AG04449 (cell line): ENCODE measurements at regions of chr6 and their contacts with region 1.

Region 1: GRCh38 chr6:26199057-26199772 is 112.0 kb downstream of the HFE start:
- DNase-seq: no peak
- H3K4me3 ChIP-seq: peak overlapping the region; percentile 85
- CTCF ChIP-seq: no peak

Region 2: DNA sequence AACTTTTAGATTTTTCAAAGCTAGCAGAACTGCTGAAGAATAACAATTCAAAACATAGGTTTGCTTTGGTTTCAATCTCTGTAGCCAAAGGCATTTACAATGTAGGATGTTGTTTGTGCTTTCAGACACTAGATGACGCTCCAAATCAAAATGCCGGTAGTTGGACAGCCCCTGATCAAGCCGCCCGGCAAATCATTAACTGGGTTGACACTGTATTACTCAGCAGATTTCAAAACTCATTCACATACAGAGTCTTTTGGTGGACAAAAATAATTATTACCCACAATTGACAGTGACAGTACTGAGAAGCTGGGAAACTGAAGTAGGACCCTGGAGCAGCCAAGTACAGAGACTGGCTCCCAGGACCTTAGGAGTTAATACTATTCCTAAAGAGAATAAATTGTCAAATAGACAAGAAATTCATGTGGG is 133.2 kb before region 1 on chr6:
- CTCF ChIA-PET with region 1: interaction called, 17 read pairs
- POLR2A ChIA-PET with region 1: no interaction called
- DNase-seq: no peak
- H3K4me3 ChIP-seq: no peak overlapping the region
- CTCF ChIP-seq: peak; percentile 75

Region 3: GRCh38 chr6:26116267-26116666 is 82.9 kb before region 1 on chr6:
- CTCF ChIA-PET with region 1: no interaction called
- POLR2A ChIA-PET with region 1: no interaction called
- DNase-seq: no peak
- H3K4me3 ChIP-seq: no peak overlapping the region
- CTCF ChIP-seq: no peak

Region 4: DNA sequence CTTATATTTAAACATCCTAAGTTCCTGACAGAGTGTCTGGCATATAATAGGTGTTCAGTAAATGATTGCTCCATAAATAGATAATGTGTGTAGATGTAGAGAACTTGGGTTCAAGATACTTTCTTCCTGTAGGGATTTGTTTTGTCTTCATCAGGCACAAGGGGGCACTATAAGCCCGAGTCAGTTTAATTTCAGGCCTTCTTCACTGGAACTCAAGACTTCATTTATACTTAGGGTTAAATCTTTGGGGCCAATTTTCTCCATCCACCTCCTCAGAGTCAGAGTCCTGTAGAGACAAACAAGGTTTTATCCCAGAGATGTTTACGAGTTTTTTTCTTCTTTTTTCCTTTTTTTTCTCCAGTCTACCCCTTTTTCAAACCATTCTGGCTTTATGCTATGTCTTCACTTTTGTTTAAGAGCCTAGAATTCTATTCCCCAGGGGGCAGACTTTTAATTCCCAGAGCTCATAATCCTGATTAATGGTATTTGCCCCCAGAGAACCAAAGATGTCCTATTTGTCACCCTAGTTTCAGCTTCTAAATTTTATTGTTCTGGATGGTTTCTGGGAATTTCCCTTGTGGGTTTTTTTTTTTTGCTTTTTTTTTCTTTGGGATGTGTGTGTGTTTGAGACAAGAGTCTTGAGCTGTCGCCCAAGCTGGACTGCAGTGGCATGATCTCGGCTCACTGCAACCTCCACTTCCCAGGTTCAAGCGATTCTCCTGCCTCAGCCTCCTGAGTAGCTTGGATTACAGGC is 23.6 kb before region 1 on chr6:
- CTCF ChIA-PET with region 1: interaction called, 6 read pairs
- POLR2A ChIA-PET with region 1: interaction called, 11 read pairs
- DNase-seq: no peak
- H3K4me3 ChIP-seq: no peak overlapping the region
- CTCF ChIP-seq: peak; percentile 40

Region 5: DNA sequence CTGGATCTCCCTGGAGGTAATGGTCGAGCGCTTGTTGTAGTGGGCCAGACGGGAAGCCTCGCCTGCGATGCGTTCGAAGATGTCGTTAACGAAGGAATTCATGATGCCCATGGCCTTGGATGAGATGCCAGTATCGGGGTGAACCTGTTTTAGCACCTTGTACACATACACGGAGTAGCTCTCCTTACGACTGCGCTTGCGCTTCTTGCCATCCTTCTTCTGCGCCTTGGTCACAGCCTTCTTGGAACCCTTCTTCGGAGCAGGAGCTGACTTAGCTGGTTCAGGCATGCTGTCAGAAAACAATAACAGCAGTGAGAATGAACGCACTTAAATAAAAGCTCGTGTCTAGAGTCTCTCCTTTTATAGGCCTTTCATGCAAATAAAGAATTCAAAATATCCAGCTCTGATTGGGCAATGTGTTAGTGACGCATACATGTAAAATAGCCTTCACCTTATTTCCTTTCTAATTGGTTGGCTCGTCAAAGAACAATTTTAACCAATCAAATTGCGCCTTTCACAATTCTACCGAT is 17.2 kb after region 1 on chr6:
- CTCF ChIA-PET with region 1: interaction called, 4 read pairs
- POLR2A ChIA-PET with region 1: interaction called, 139 read pairs
- DNase-seq: peak; percentile 98
- H3K4me3 ChIP-seq: peak overlapping the region; percentile 67
- CTCF ChIP-seq: no peak

Region 6: GRCh38 chr6:26270903-26271667 is 71.9 kb after region 1 on chr6:
- CTCF ChIA-PET with region 1: no interaction called
- POLR2A ChIA-PET with region 1: interaction called, 15 read pairs
- DNase-seq: no peak
- H3K4me3 ChIP-seq: peak overlapping the region; percentile 63
- CTCF ChIP-seq: no peak